Adrenal gland (tissue), 19 donors: ENCODE measurements at regions of chr4 and their contacts with region 1.

Region 1: DNA sequence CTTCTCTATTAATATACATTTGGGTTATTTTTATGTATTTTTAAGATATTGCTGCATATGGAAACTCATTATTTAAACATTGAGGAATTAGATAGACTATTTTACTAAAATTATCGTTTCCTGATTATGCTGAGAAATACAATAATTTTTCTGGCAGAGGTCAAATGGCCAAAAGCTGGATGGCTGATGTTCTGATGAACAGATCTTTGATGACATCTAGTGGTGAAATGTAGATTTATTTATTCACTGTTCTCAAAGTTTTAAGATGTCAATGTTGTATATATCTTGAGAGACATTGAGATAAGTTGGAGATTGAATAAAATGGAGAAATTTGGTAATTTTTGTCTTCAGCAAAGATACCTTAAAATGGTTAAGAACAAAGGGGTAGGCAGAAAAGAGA is 96.2 kb downstream of the UGT8 start:
- DNase-seq: no peak
- H3K4me3 ChIP-seq: no peak overlapping the region
- H3K27ac ChIP-seq: no peak overlapping the region
- H3K4me1 ChIP-seq: no peaks in the 10 kb centered on the region
- H3K27me3 ChIP-seq: no peaks in the 10 kb centered on the region
- CTCF ChIP-seq: peak; percentile 32 to 68 (median 58)
- POLR2A ChIP-seq: no peak

Region 2: DNA sequence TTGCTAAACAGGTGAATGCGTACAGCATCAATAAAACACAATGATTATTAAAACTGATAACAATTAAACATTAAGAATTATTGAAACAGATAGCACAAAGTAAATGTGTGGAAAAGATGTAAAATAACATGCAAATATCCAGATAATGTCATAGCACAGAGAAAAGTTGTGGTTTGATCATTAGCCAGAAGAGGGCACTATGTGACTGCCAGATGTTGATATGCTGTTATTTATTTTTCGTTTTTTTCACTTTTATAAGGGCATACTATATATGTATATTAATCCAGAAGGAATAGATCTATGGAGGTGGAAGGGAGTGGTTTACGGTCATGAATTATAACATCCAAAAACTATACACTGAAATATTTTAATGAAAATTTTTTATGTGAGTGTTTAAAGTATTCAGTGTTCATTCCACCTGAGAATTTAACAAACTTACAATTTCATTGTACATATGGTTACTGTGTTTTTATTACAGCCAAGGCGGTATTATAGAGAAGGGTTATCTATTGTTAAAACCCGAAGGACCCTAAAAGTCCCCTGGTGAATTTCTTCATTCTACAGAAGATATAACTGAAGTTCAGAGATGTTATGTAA is 308.0 kb before region 1 on chr4:
- intact Hi-C with region 1: loop called in 1 of 2 experiments (anchors 10 kb)
- DNase-seq: no peak
- H3K4me3 ChIP-seq: no peak overlapping the region
- H3K27ac ChIP-seq: no peak overlapping the region
- H3K4me1 ChIP-seq: no peaks in the 10 kb centered on the region
- H3K27me3 ChIP-seq: no peaks in the 10 kb centered on the region
- CTCF ChIP-seq: peak; percentile 24 to 73 (median 56)
- POLR2A ChIP-seq: no peak